Right ventricle myocardium inferior (tissue), 1 donor: ENCODE measurements at regions of chr18 and their contacts with region 1.

Region 1: DNA sequence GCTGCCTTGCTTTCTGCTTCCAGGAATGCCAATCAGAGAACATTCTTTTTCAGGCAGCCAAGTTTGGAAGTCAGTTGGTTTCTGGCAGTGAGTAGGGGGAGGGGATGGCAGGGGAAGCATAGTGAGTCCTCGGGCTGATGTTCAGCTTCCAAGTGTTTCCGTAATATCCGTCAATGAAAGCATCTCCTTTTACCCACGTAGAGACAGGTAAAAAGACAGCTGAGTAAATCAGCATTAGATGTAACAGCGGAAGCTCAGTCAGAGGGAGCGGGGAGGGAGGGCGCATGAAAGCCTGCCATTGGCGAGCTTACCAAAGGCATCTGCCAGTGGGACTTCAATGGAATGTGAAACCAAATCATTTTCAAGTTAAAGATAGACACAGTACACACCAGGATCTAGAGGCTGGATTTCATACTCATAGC is 117.1 kb upstream of the DTNA start:
- DNase-seq: no peak
- ATAC-seq: peak; percentile 91

Region 2: DNA sequence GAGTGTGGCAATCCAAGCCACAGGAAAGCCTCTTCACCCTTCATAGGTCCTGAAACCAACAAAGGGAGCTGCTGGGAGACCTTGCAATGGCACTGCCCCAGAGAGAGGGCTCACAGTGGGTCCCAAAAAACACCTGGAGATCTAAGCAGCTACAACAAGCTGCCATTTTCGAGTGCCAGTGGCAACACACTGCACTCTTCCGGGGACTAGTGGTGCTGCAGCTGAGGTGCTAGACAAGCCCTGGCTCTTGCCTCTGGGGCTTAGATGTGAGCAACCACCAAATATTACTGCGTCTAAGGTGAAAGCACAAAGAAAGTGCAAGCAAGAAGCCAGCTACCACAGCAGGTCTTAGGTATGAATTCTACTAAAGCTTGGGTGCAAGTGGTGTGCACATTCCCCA is 561.2 kb before region 1 on chr18:
- intact Hi-C with region 1: no loop called
- DNase-seq: no peak
- ATAC-seq: no peak

Region 3: GRCh38 chr18:34643989-34644388 is 51.0 kb after region 1 on chr18:
- intact Hi-C with region 1: loop called (anchors 5 kb)
- DNase-seq: no peak
- ATAC-seq: no peak

Region 4: DNA sequence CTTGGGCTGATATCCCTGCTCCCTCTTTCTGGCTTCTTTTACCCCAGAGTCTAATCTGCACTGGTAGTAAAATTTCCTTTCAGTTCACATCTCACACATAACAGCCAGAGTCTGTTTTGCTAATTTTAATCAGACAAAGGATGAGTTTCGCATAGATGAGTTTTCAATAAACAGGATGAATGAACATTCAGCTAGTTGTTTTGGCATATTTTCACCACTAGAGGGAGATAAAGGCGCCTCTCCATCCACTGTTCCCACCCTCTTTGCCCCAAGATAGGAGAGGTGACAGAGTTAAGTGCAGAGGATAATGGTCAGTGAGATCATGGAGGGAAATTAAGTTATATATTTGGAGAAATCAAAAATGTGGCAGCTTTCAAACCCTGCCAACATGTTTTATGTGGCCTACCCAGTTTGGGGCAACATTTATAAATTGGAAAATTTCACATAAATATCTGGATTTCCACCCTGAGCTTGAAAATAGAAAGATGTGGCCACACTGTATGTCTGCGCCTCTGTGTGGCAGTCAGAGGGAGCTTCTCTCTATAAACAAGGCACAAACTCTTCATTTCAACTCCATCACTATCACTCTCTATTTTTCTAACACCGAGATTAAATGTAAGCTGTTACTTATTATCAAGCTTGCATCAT is 68.6 kb after region 1 on chr18:
- intact Hi-C with region 1: loop called (anchors 2 kb)
- DNase-seq: no peak
- ATAC-seq: no peak

Region 5: DNA sequence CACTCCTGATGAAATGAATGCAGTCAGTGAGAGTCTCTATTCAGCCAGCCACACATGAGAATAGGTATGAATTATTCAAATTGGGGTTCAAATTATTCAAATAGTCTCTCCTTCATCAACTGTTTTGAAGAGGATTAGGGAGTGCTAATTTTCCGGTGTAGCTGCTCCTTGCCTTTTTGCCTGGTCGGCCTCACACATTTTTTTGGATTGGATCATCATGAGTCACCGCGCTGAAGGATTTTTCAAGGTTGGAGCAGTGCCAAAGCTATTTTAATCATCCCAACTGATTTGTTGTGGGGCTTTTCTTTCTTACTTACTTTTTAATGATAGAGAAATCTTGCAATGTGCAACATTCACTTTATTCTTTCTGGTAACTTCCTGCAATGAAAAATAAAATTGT is 114.7 kb after region 1 on chr18:
- intact Hi-C with region 1: loop called (anchors 5 kb)
- DNase-seq: no peak
- ATAC-seq: peak; percentile 38